ENCODE measurements at regions of chr11 and their contacts with region 1.

Region 1: GRCh38 chr11:118198370-118198769 is 21.9 kb upstream of the SCN2B start:
- DNase-seq: peak; percentile 69 to 81 (median 76)
- H3K4me3 ChIP-seq: no peak overlapping the region
- H3K4me3 Mint-ChIP-seq: peak overlapping the region in 7 of 8 donors; percentile 13 to 70 (median 47)
- H3K27ac ChIP-seq: peak overlapping the region; percentile 27
- H3K27ac Mint-ChIP-seq: peak overlapping the region in 6 of 7 donors; percentile 26 to 93 (median 77)
- H3K4me1 ChIP-seq: peaks cover 47% of the 10 kb centered on the region
- H3K4me1 Mint-ChIP-seq: peaks cover 3 to 14% (median 9%) of the 10 kb centered on the region in 4 donors
- H3K27me3 ChIP-seq: no peaks in the 10 kb centered on the region
- H3K27me3 Mint-ChIP-seq: no peaks in the 10 kb centered on the region

Region 2: GRCh38 chr11:118171269-118172062 is 26.9 kb before region 1 on chr11:
- CTCF ChIA-PET with region 1: interaction called, 15 read pairs
- POLR2A ChIA-PET with region 1: no interaction called
- intact Hi-C with region 1: no loop called
- DNase-seq: peak; percentile 63 to 72 (median 65)
- H3K4me3 ChIP-seq: no peak overlapping the region
- H3K4me3 Mint-ChIP-seq: peak overlapping the region in 2 of 8 donors; percentile 9 to 12
- H3K27ac ChIP-seq: no peak overlapping the region
- H3K27ac Mint-ChIP-seq: no peak overlapping the region
- H3K4me1 ChIP-seq: peaks cover 8% of the 10 kb centered on the region
- H3K4me1 Mint-ChIP-seq: peaks cover 0 to 5% (median 2%) of the 10 kb centered on the region in 4 donors
- H3K27me3 ChIP-seq: no peaks in the 10 kb centered on the region
- H3K27me3 Mint-ChIP-seq: peaks cover 4 to 15% of the 10 kb centered on the region in 2 donors

Region 3: GRCh38 chr11:118227865-118228785 is 29.8 kb after region 1 on chr11:
- CTCF ChIA-PET with region 1: interaction called, 47 read pairs
- POLR2A ChIA-PET with region 1: interaction called, 42 read pairs
- intact Hi-C with region 1: loop called (anchors 2 kb)
- DNase-seq: peak in 4 of 5 donors; percentile 51 to 67 (median 62)
- H3K4me3 ChIP-seq: peak overlapping the region in 1 of 2 donors; percentile 5
- H3K4me3 Mint-ChIP-seq: peak overlapping the region in 7 of 8 donors; percentile 22 to 79 (median 78)
- H3K27ac ChIP-seq: peak overlapping the region; percentile 58
- H3K27ac Mint-ChIP-seq: peak overlapping the region in 2 of 7 donors; percentile 94 to 95
- H3K4me1 ChIP-seq: peaks cover 84% of the 10 kb centered on the region
- H3K4me1 Mint-ChIP-seq: peaks cover 25 to 54% (median 39%) of the 10 kb centered on the region in 4 donors
- H3K27me3 ChIP-seq: no peaks in the 10 kb centered on the region
- H3K27me3 Mint-ChIP-seq: no peaks in the 10 kb centered on the region

Region 4: GRCh38 chr11:118251858-118252652 is 53.7 kb after region 1 on chr11 and contains the start of gene MPZL3:
- CTCF ChIA-PET with region 1: interaction called, 36 read pairs
- POLR2A ChIA-PET with region 1: interaction called, 32 read pairs
- intact Hi-C with region 1: no loop called
- DNase-seq: peak; percentile 87 to 96 (median 91)
- H3K4me3 ChIP-seq: peak within 1 kb of the TSS; percentile 57 to 94
- H3K4me3 Mint-ChIP-seq: peak within 1 kb of the TSS; percentile 95 to 99 (median 98)
- H3K27ac ChIP-seq: peak within 1 kb of the TSS; percentile 94
- H3K27ac Mint-ChIP-seq: peak within 1 kb of the TSS; percentile 99 to 100 (median 99)
- H3K4me1 ChIP-seq: peaks cover 43% of the 10 kb centered on the region
- H3K4me1 Mint-ChIP-seq: peaks cover 26 to 53% (median 39%) of the 10 kb centered on the region in 4 donors
- H3K27me3 ChIP-seq: no peaks in the 10 kb centered on the region
- H3K27me3 Mint-ChIP-seq: peaks cover 0 to 2% of the 10 kb centered on the region in 2 donors
- total RNA-seq, gene MPZL3: 29.9 to 32.0 TPM

Region 5: GRCh38 chr11:118290923-118291322 is 92.6 kb after region 1 on chr11:
- CTCF ChIA-PET with region 1: interaction called, 138 read pairs
- POLR2A ChIA-PET with region 1: interaction called, 17 read pairs
- intact Hi-C with region 1: loop called (anchors 1 kb)
- DNase-seq: peak; percentile 46 to 61 (median 49)
- H3K4me3 ChIP-seq: no peak overlapping the region
- H3K4me3 Mint-ChIP-seq: peak overlapping the region in 1 of 8 donors; percentile 40
- H3K27ac ChIP-seq: no peak overlapping the region
- H3K27ac Mint-ChIP-seq: peak overlapping the region in 2 of 7 donors; percentile 18 to 36
- H3K4me1 ChIP-seq: peaks cover 4% of the 10 kb centered on the region
- H3K4me1 Mint-ChIP-seq: peaks cover 8 to 13% (median 10%) of the 10 kb centered on the region in 4 donors
- H3K27me3 ChIP-seq: no peaks in the 10 kb centered on the region
- H3K27me3 Mint-ChIP-seq: no peaks in the 10 kb centered on the region

Region 6: GRCh38 chr11:118353084-118353710 is 154.8 kb after region 1 on chr11:
- CTCF ChIA-PET with region 1: interaction called, 34 read pairs
- POLR2A ChIA-PET with region 1: no interaction called
- intact Hi-C with region 1: loop called (anchors 1 kb)
- DNase-seq: peak in 4 of 5 donors; percentile 53 to 64 (median 63)
- H3K4me3 ChIP-seq: no peak overlapping the region
- H3K4me3 Mint-ChIP-seq: no peak overlapping the region
- H3K27ac ChIP-seq: peak overlapping the region; percentile 44
- H3K27ac Mint-ChIP-seq: peak overlapping the region; percentile 86 to 96 (median 93)
- H3K4me1 ChIP-seq: peaks cover 22% of the 10 kb centered on the region
- H3K4me1 Mint-ChIP-seq: peaks cover 22 to 29% (median 24%) of the 10 kb centered on the region in 4 donors
- H3K27me3 ChIP-seq: no peaks in the 10 kb centered on the region
- H3K27me3 Mint-ChIP-seq: no peaks in the 10 kb centered on the region

Region 7: GRCh38 chr11:118672846-118673245 is 474.5 kb after region 1 on chr11:
- CTCF ChIA-PET with region 1: no interaction called
- POLR2A ChIA-PET with region 1: no interaction called
- intact Hi-C with region 1: no loop called
- DNase-seq: no peak
- H3K4me3 ChIP-seq: no peak overlapping the region
- H3K4me3 Mint-ChIP-seq: no peak overlapping the region
- H3K27ac ChIP-seq: no peak overlapping the region
- H3K27ac Mint-ChIP-seq: no peak overlapping the region
- H3K4me1 ChIP-seq: no peaks in the 10 kb centered on the region
- H3K4me1 Mint-ChIP-seq: no peaks in the 10 kb centered on the region
- H3K27me3 ChIP-seq: no peaks in the 10 kb centered on the region
- H3K27me3 Mint-ChIP-seq: peaks cover 4 to 6% of the 10 kb centered on the region in 2 donors

Measured in CD4-positive, alpha-beta memory T cell (primary cell).